Pancreas (tissue), 10 donors: ENCODE measurements at regions of chr16 and their contacts with region 1.

Region 1: DNA sequence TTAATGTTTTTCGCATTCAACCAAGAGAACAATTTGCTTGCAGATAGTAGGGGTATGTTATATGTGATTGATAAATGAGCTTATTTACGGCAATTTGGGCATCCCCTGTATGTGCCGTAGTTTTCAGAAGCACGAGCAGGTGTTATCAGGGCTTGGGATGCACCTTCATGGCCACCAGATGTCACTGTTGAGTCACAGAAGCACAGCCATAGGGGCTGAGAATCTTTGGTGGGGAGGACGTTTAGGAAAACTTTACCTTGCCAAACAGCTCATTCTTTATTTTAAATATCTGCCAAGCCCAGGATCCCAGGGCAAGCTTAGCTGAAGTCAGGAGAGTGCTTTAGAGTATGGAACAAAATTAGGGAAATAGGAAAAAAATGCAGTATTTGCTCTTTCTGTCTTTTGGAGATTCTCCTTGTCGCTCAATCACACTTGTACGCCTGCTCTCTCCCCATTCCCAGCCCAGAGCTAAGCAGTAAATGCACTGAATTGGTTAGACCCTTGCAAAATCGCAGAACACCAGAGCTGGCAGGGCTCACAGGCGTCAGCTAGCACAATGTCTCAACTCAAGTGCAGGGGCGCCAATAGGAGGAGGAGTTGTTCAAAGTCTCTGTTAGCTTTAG is 93.6 kb upstream of the MPHOSPH6 start:
- DNase-seq: peak in 4 of 6 donors; percentile 16 to 54 (median 28)
- ATAC-seq: peak; percentile 74 to 91 (median 86)
- H3K4me3 ChIP-seq: no peak overlapping the region
- H3K27ac ChIP-seq: no peak overlapping the region
- H3K4me1 ChIP-seq: no peaks in the 10 kb centered on the region
- H3K27me3 ChIP-seq: no peaks in the 10 kb centered on the region
- CTCF ChIP-seq: peak; percentile 79 to 93 (median 90)

Region 2: GRCh38 chr16:82344157-82344556 is 80.5 kb after region 1 on chr16:
- intact Hi-C with region 1: loop called in 2 of 3 experiments (anchors 5 to 10 kb)
- DNase-seq: no peak
- ATAC-seq: peak; percentile 58 to 85 (median 74)
- H3K4me3 ChIP-seq: no peak overlapping the region
- H3K27ac ChIP-seq: no peak overlapping the region
- H3K4me1 ChIP-seq: no peaks in the 10 kb centered on the region
- H3K27me3 ChIP-seq: no peaks in the 10 kb centered on the region
- CTCF ChIP-seq: peak in 3 of 4 donors; percentile 19 to 34 (median 30)

Region 3: DNA sequence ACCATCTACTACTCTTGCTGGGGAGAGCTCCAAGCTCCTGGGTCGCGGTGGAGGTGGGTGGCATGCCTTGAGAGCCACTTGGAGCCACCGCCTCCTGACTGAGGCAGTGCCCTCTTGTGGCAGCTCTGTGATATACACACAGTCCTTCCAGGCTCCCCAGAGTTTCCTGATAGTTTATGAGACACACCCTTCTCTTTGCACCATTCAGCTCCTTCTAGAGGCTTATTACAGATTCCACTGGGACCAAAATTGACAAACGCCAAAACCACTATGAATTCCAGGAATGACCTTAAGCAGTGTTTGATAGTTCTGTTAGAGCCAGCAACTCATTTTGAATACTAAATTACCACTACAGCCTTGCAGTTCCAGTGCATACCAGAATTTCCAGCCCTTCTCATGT is 193.1 kb after region 1 on chr16:
- intact Hi-C with region 1: loop called in 2 of 3 experiments (anchors 10 kb)
- DNase-seq: peak; percentile 16 to 77 (median 58)
- ATAC-seq: peak; percentile 63 to 92 (median 91)
- H3K4me3 ChIP-seq: no peak overlapping the region
- H3K27ac ChIP-seq: no peak overlapping the region
- H3K4me1 ChIP-seq: no peaks in the 10 kb centered on the region
- H3K27me3 ChIP-seq: no peaks in the 10 kb centered on the region
- CTCF ChIP-seq: peak; percentile 58 to 81 (median 75)

Region 4: DNA sequence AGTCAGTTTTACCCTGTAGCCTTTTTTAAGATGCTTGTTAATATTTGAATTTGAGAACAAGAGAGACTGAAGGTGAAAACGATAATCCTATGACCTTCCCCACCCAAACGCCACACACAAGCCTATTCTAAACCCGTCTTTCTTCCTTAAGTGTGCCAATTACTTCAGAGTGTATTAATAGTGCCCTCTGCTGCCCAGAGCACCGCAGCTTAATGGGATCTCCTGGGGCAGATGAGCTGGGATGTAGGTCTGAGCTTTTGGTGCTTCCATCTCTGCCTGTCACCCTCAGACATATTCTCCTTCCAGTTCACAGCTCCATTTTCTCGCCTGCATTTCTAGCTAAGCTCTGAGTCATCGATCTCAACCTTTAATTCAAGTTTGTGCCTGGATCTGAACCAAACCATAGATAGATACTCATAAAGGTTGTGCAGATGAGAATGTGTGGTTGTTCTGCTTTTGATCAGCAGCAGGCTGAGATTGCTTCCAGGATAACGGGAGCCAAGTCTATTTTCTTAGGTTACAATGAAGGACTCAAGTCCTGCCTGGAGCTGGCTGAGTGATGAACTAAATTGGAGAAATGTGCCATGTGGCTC is 316.8 kb after region 1 on chr16:
- intact Hi-C with region 1: loop called in 1 of 3 experiments (anchors 10 kb)
- DNase-seq: peak in 1 of 6 donors; percentile 11
- ATAC-seq: peak in 3 of 4 donors; percentile 44 to 54 (median 45)
- H3K4me3 ChIP-seq: no peak overlapping the region
- H3K27ac ChIP-seq: no peak overlapping the region
- H3K4me1 ChIP-seq: no peaks in the 10 kb centered on the region
- H3K27me3 ChIP-seq: no peaks in the 10 kb centered on the region
- CTCF ChIP-seq: peak in 1 of 4 donors; percentile 15